Dendritic cell treated with granulocyte-macrophage colony-stimulating factor and Interleukin-4, amounts not matched to agents 40 ng/mL and 50 ng/mL, for 4 days (primary cell): ENCODE measurements at regions of chr12 and their contacts with region 1.

Region 1: GRCh38 chr12:108821407-108822397 is 35.7 kb downstream of the SSH1 start:
- H3K4me3 Mint-ChIP-seq: no peak overlapping the region
- H3K27ac Mint-ChIP-seq: peak overlapping the region; percentile 87
- H3K4me1 Mint-ChIP-seq: peaks cover 71% of the 10 kb centered on the region
- H3K27me3 Mint-ChIP-seq: no peaks in the 10 kb centered on the region

Region 2: GRCh38 chr12:108838194-108839017 is 16.7 kb after region 1 on chr12:
- intact Hi-C with region 1: loop called (anchors 2 kb)
- H3K4me3 Mint-ChIP-seq: peak overlapping the region; percentile 33
- H3K27ac Mint-ChIP-seq: peak overlapping the region; percentile 89
- H3K4me1 Mint-ChIP-seq: peaks cover 78% of the 10 kb centered on the region
- H3K27me3 Mint-ChIP-seq: no peaks in the 10 kb centered on the region

Region 3: GRCh38 chr12:108856428-108857157 is 34.9 kb after region 1 on chr12:
- intact Hi-C with region 1: loop called (anchors 5 kb)
- H3K4me3 Mint-ChIP-seq: peak overlapping the region; percentile 80
- H3K27ac Mint-ChIP-seq: peak overlapping the region; percentile 91
- H3K4me1 Mint-ChIP-seq: peaks cover 86% of the 10 kb centered on the region
- H3K27me3 Mint-ChIP-seq: no peaks in the 10 kb centered on the region

Region 4: DNA sequence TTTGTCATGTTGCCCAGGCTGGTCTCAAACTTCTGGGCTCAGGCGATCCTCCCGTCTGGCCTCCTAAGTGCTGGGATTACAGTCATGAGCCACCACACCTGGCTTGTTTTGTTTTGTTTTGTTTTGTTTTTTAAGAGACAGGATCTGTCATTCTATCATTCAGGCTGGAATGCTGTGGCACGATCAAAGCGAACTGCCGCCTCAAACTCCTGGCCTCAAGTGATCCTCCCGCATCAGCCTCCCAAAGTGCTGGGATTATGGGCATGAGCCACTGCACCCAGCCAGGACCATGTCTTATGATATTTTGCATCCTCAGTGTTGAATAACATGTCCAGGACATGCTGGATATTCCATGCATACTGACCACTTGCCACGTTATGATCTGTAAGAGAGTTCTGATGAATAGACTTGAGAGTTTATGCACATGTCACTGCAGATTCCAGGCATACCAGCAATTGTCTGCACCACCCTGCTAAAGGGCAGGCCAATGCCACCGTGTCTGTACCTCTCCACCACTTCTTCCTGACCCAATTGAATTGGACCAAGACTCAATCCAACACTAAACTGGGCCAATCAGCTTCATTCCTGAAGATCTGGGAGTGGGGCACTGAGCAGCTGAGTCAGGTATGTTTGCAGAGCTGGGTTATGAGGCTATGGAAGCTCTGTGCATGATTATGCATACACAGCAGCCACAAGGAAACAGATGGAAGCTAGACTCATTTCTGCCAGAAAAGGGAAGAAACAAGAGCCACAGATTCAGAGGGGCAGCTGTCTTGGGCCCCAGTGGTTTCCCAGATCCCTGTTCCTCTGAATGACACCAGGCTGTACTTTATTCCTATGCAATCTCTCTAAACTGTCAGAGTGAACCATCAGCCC is 86.0 kb after region 1 on chr12:
- intact Hi-C with region 1: loop called (anchors 5 kb)
- H3K4me3 Mint-ChIP-seq: peak overlapping the region; percentile 34
- H3K27ac Mint-ChIP-seq: peak overlapping the region; percentile 98
- H3K4me1 Mint-ChIP-seq: peaks cover 73% of the 10 kb centered on the region
- H3K27me3 Mint-ChIP-seq: no peaks in the 10 kb centered on the region

Region 5: GRCh38 chr12:108950991-108951739 is 129.5 kb after region 1 on chr12:
- intact Hi-C with region 1: loop called (anchors 5 kb)
- H3K4me3 Mint-ChIP-seq: no peak overlapping the region
- H3K27ac Mint-ChIP-seq: no peak overlapping the region
- H3K4me1 Mint-ChIP-seq: peaks cover 26% of the 10 kb centered on the region
- H3K27me3 Mint-ChIP-seq: peaks cover 15% of the 10 kb centered on the region